Activated B cell treated with CpG ODN at 0.5 μM for 24 hours (primary cell): ENCODE measurements at regions of chr9 and their contacts with region 1.

Region 1: DNA sequence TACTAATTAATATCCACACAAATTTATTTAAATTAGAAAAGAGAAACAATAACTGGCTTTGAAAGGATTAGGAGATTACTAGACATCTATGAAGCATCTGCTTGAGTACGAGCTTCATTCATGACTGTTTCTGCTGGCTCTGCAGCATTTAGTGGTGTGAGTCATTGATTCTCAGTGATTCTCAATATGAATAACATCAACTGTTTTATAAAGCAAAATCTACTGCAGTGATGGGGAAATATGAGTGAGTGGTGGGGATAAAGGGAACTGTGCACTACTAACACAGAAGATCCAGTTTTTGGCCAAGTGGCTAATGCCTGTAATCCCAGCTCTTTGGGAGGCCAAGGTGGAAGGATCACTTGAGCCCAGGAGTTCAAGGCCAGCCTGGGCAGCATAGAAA is 8.4 kb downstream of the FNBP1 start:
- DNase-seq: no peak
- ATAC-seq: peak; percentile 38
- H3K4me3 Mint-ChIP-seq: peak overlapping the region; percentile 54
- H3K27ac Mint-ChIP-seq: peak overlapping the region; percentile 95
- H3K4me1 Mint-ChIP-seq: peaks cover 97% of the 10 kb centered on the region
- H3K27me3 Mint-ChIP-seq: no peaks in the 10 kb centered on the region
- CTCF ChIP-seq: no peak

Region 2: DNA sequence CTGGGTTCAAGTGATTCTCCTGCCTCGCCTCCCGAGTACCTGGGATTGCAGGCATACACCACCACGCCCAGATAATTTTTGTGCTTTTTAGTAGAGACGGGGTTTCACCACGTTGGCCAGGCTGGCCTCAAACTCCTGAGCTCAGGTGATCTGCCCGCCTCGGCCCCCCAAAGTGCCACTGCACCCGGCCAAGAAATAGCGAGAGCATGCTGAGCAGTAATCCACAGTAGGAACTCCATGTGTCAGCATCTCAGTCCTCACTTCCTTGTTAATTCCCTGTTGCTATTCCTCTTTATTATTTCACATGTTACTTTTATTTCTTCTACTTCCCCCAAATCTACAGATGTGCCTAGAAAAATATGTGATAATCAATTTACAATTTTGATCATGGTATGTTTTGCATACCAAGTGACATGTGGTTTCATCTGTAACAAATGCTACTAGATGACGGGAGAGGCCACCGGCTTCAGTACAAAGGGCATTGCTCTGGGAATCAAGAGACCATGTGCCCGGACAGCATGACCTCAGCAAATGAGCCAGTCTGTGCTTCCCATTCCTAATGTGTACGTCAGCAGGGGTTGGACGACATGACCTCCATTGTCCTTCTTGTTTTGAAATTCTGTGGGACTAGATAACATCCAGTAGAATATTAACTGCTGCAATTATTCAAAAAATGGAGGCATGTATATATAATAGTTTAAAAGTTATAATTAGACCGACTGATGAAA is 53.2 kb before region 1 on chr9:
- CTCF ChIA-PET with region 1: no interaction called
- POLR2A ChIA-PET with region 1: interaction called, 680 read pairs
- intact Hi-C with region 1: no loop called
- DNase-seq: no peak
- ATAC-seq: no peak
- H3K4me3 Mint-ChIP-seq: no peak overlapping the region
- H3K27ac Mint-ChIP-seq: peak overlapping the region; percentile 47
- H3K4me1 Mint-ChIP-seq: peaks cover 68% of the 10 kb centered on the region
- H3K27me3 Mint-ChIP-seq: no peaks in the 10 kb centered on the region
- CTCF ChIP-seq: no peak

Region 3: DNA sequence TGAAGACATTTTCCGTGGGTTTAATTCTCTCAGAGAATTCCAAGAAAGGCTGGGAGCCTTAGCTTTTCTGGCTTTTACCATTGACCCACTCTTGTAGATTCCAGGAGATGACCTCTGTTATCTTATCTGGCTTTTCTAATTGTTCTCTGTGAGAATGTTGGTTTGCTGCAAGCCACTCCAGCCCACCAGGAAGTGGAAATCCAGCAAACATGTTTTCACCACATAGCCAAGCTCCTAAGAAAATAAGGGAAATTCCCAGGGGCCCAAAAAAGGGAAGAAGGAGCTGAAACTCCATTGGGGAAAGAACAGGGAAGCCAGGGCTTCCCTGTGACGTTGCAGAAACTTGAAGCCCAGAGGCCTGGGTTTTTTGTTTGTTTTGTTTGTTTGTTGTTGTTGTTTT is 38.8 kb after region 1 on chr9:
- CTCF ChIA-PET with region 1: interaction called, 4 read pairs
- POLR2A ChIA-PET with region 1: interaction called, 11 read pairs
- intact Hi-C with region 1: no loop called
- DNase-seq: no peak
- ATAC-seq: no peak
- H3K4me3 Mint-ChIP-seq: no peak overlapping the region
- H3K27ac Mint-ChIP-seq: no peak overlapping the region
- H3K4me1 Mint-ChIP-seq: peaks cover 31% of the 10 kb centered on the region
- H3K27me3 Mint-ChIP-seq: no peaks in the 10 kb centered on the region
- CTCF ChIP-seq: no peak

Region 4: GRCh38 chr9:130118841-130119518 is 84.4 kb after region 1 on chr9:
- CTCF ChIA-PET with region 1: no interaction called
- POLR2A ChIA-PET with region 1: no interaction called
- intact Hi-C with region 1: no loop called
- DNase-seq: no peak
- ATAC-seq: no peak
- H3K4me3 Mint-ChIP-seq: no peak overlapping the region
- H3K27ac Mint-ChIP-seq: no peak overlapping the region
- H3K4me1 Mint-ChIP-seq: peaks cover 9% of the 10 kb centered on the region
- H3K27me3 Mint-ChIP-seq: no peaks in the 10 kb centered on the region
- CTCF ChIP-seq: no peak